Testis (tissue), 5 donors: ENCODE measurements at regions of chr9 and their contacts with region 1.

Region 1: GRCh38 chr9:72280913-72281500 is 84.0 kb downstream of the ZFAND5 start:
- DNase-seq: peak; percentile 86
- H3K4me3 ChIP-seq: peak overlapping the region in 1 of 2 donors; percentile 14
- H3K27ac ChIP-seq: no peak overlapping the region
- H3K4me1 ChIP-seq: peaks cover 2% of the 10 kb centered on the region
- H3K27me3 ChIP-seq: no peaks in the 10 kb centered on the region
- CTCF ChIP-seq: peak; percentile 77 to 86 (median 80)
- POLR2A ChIP-seq: no peak

Region 2: GRCh38 chr9:72827950-72828731 is 547.1 kb after region 1 on chr9:
- intact Hi-C with region 1: loop called (anchors 10 kb)
- DNase-seq: no peak
- H3K4me3 ChIP-seq: no peak overlapping the region
- H3K27ac ChIP-seq: peak overlapping the region in 1 of 2 donors; percentile 59
- H3K4me1 ChIP-seq: peaks cover 12% of the 10 kb centered on the region
- H3K27me3 ChIP-seq: no peaks in the 10 kb centered on the region
- CTCF ChIP-seq: no peak
- POLR2A ChIP-seq: no peak